Right ventricle myocardium inferior (tissue), 1 donor: ENCODE measurements at regions of chr17 and their contacts with region 1.

Region 1: DNA sequence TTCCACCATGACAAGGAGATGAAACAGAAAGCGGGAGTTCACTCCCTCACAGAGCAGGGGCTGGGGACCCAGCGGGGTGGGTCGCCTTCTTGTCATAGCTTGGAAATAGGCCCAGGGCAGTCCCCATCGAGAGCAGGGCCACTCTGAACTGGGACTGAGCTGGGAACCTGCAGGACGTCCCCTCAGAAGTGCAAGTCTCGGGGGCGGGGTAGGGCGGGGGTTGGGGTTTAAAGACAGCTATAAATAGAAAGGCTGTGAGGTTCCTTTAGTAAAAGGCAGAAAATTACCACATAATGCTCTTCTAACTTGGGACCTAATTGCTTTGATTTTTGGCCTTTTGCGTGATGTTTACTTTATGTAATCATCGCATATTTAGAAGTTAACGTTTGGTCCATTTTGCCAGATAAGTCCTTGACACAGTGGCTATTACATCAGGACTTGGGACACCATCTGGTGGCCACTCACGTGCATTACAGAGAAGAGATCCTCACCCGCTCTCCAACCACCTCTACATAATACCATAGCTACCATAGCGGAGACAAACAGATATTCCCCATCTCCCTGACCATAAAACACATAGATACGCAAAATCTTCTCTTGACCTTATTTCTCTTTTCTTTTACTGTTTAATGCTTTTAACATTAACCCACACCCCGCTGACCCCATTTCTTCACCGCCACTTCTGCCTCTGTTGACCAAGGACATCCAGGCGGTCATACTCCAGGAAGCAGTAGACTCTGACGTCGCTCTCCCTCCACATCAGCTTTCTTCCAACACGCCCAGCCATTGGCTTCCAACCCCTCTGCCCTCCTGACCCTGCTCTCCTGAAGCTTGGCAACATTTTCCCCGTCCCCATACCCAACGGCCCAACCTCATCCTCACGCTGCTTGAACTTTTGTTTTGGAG is 27.5 kb upstream of the PIK3R6 start:
- DNase-seq: no peak
- ATAC-seq: peak; percentile 84

Region 2: GRCh38 chr17:8753976-8754440 is 140.9 kb before region 1 on chr17:
- intact Hi-C with region 1: loop called (anchors 5 kb)
- DNase-seq: no peak
- ATAC-seq: no peak

Region 3: GRCh38 chr17:8798846-8799569 is 95.9 kb before region 1 on chr17 and contains the start of gene MFSD6L:
- intact Hi-C with region 1: loop called (anchors 1 kb)
- DNase-seq: no peak
- ATAC-seq: peak; percentile 45
- total RNA-seq, gene MFSD6L: 0.11 TPM